Calu3 (cell line): ENCODE measurements at regions of chr14 and their contacts with region 1.

Region 1: DNA sequence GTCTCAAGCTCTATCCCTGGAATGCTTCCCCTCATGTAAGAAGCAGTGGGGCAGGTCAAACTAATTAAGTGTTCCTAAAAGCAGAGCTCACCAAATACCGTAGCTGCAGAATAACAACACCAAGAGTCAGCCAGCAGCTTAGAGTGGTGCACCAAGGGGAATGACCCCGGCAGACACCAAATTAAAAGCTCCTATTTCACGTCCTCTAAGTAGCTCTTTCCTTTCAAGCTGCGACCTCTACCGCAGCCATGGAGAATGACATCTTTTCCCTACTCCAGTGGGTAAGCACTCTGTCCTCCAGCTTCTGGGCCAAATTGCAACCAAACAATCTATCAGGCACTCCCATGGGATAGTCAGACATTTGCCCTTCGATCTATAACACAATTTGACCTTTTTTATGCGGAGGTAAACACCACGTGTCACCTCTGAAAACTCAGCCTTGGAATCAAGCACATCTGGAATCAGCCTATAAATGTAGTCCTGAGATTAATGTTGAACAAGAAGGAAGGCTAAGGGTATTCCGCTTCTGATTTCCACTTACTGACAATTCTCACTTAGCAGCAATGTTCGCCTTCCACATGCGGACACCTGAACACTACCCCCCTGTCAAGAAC is 67.6 kb upstream of the CDKN3 start:
- DNase-seq: peak; percentile 50
- H3K4me3 Mint-ChIP-seq: no peak overlapping the region
- H3K27ac Mint-ChIP-seq: no peak overlapping the region
- H3K4me1 Mint-ChIP-seq: no peaks in the 10 kb centered on the region
- H3K27me3 Mint-ChIP-seq: no peaks in the 10 kb centered on the region
- CTCF ChIP-seq: peak; percentile 48

Region 2: GRCh38 chr14:53929871-53930715 is 399.1 kb before region 1 on chr14:
- CTCF ChIA-PET with region 1: no interaction called
- intact Hi-C with region 1: loop called (anchors 10 kb)
- DNase-seq: peak; percentile 76
- H3K4me3 Mint-ChIP-seq: no peak overlapping the region
- H3K27ac Mint-ChIP-seq: no peak overlapping the region
- H3K4me1 Mint-ChIP-seq: peaks cover 28% of the 10 kb centered on the region
- H3K27me3 Mint-ChIP-seq: no peaks in the 10 kb centered on the region
- CTCF ChIP-seq: peak; percentile 43

Region 3: GRCh38 chr14:54025661-54026060 is 303.5 kb before region 1 on chr14:
- CTCF ChIA-PET with region 1: no interaction called
- intact Hi-C with region 1: loop called (anchors 1 kb)
- DNase-seq: peak; percentile 44
- H3K4me3 Mint-ChIP-seq: no peak overlapping the region
- H3K27ac Mint-ChIP-seq: no peak overlapping the region
- H3K4me1 Mint-ChIP-seq: no peaks in the 10 kb centered on the region
- H3K27me3 Mint-ChIP-seq: no peaks in the 10 kb centered on the region
- CTCF ChIP-seq: peak; percentile 49

Region 4: DNA sequence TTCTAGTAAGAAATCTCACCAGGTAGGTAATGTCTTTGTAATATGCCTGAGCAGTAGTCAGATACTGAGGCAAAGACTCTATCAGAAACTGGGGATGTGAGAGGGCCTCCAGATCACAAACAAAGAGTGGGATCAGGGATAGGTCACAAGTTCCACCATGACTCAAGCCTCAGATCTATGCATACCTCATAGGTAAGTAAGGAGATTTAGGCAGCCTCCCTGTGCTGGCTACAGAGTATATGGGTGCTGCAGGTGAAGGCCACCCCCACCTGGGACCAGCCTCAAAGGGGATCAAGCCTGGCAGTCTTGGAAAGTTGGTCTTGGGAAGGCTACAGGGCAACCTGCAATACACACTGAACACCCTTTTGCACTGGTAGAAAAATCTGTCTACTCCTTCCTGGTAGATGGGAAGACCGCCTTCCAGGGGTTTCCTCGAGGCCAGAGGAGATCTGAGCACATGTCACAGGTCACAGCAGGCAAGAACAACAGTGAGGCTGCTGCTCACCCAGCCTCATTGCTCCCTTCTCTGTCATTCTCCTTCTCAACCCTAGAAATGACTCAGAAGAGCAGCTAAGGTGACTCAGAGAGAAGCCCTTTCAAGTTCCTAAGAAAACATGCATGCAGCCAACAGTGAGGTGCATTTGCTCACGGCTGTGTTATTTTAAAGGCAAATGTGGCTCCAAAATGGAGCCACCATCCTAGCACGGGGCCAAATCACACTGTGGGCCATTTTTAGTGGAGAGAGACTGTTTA is 75.8 kb before region 1 on chr14:
- CTCF ChIA-PET with region 1: interaction called, 9 read pairs
- intact Hi-C with region 1: loop called (anchors 2 kb)
- DNase-seq: peak; percentile 14
- H3K4me3 Mint-ChIP-seq: no peak overlapping the region
- H3K27ac Mint-ChIP-seq: no peak overlapping the region
- H3K4me1 Mint-ChIP-seq: peaks cover 50% of the 10 kb centered on the region
- H3K27me3 Mint-ChIP-seq: no peaks in the 10 kb centered on the region
- CTCF ChIP-seq: no peak